ENCODE measurements at regions of chr21 and their contacts with region 1.

Region 1: GRCh38 chr21:15592271-15592860 is 137.4 kb upstream of the USP25 start:
- DNase-seq: no peak
- H3K4me3 Mint-ChIP-seq: no peak overlapping the region
- H3K27ac Mint-ChIP-seq: no peak overlapping the region
- H3K4me1 Mint-ChIP-seq: no peaks in the 10 kb centered on the region
- H3K27me3 Mint-ChIP-seq: peaks cover 12% of the 10 kb centered on the region

Region 2: GRCh38 chr21:14259747-14260146 is 1332.6 kb before region 1 on chr21:
- intact Hi-C with region 1: loop called (anchors 5 kb)
- DNase-seq: no peak
- H3K4me3 Mint-ChIP-seq: no peak overlapping the region
- H3K27ac Mint-ChIP-seq: no peak overlapping the region
- H3K4me1 Mint-ChIP-seq: peaks cover 2% of the 10 kb centered on the region
- H3K27me3 Mint-ChIP-seq: peaks cover 14% of the 10 kb centered on the region

Region 3: GRCh38 chr21:15430577-15430976 is 161.8 kb before region 1 on chr21:
- intact Hi-C with region 1: no loop called
- DNase-seq: no peak
- H3K4me3 Mint-ChIP-seq: no peak overlapping the region
- H3K27ac Mint-ChIP-seq: no peak overlapping the region
- H3K4me1 Mint-ChIP-seq: no peaks in the 10 kb centered on the region
- H3K27me3 Mint-ChIP-seq: no peaks in the 10 kb centered on the region